Activated CD4-positive, alpha-beta T cell treated with anti-CD3 and anti-CD28 coated beads, Interleukin-2, amount 10 ng/mL, durations not matched to agents 7 days and 5 days (primary cell): ENCODE measurements at regions of chr1 and their contacts with region 1.

Region 1: GRCh38 chr1:89358287-89358893 is 5.5 kb upstream of the GBP6 start:
- DNase-seq: peak; percentile 90
- H3K4me3 Mint-ChIP-seq: peak overlapping the region; percentile 11
- H3K27ac Mint-ChIP-seq: peak overlapping the region; percentile 85
- H3K4me1 Mint-ChIP-seq: peaks cover 55% of the 10 kb centered on the region
- H3K27me3 Mint-ChIP-seq: peaks cover 5% of the 10 kb centered on the region

Region 2: GRCh38 chr1:89274411-89274857 is 84.0 kb before region 1 on chr1:
- CTCF ChIA-PET with region 1: interaction called, 21 read pairs
- POLR2A ChIA-PET with region 1: no interaction called
- DNase-seq: no peak
- H3K4me3 Mint-ChIP-seq: peak overlapping the region; percentile 68
- H3K27ac Mint-ChIP-seq: peak overlapping the region; percentile 95
- H3K4me1 Mint-ChIP-seq: peaks cover 57% of the 10 kb centered on the region
- H3K27me3 Mint-ChIP-seq: no peaks in the 10 kb centered on the region

Region 3: GRCh38 chr1:89347296-89347695 is 11.1 kb before region 1 on chr1:
- CTCF ChIA-PET with region 1: interaction called, 10 read pairs
- POLR2A ChIA-PET with region 1: no interaction called
- DNase-seq: no peak
- H3K4me3 Mint-ChIP-seq: no peak overlapping the region
- H3K27ac Mint-ChIP-seq: no peak overlapping the region
- H3K4me1 Mint-ChIP-seq: no peaks in the 10 kb centered on the region
- H3K27me3 Mint-ChIP-seq: no peaks in the 10 kb centered on the region

Region 4: GRCh38 chr1:89369331-89369730 is 10.9 kb after region 1 on chr1:
- CTCF ChIA-PET with region 1: no interaction called
- POLR2A ChIA-PET with region 1: no interaction called
- DNase-seq: no peak
- H3K4me3 Mint-ChIP-seq: no peak overlapping the region
- H3K27ac Mint-ChIP-seq: peak overlapping the region; percentile 10
- H3K4me1 Mint-ChIP-seq: peaks cover 2% of the 10 kb centered on the region
- H3K27me3 Mint-ChIP-seq: peaks cover 4% of the 10 kb centered on the region

Region 5: GRCh38 chr1:89425056-89425455 is 66.7 kb after region 1 on chr1:
- CTCF ChIA-PET with region 1: no interaction called
- POLR2A ChIA-PET with region 1: no interaction called
- DNase-seq: no peak
- H3K4me3 Mint-ChIP-seq: no peak overlapping the region
- H3K27ac Mint-ChIP-seq: no peak overlapping the region
- H3K4me1 Mint-ChIP-seq: no peaks in the 10 kb centered on the region
- H3K27me3 Mint-ChIP-seq: peaks cover 2% of the 10 kb centered on the region